RWPE1 (cell line): ENCODE measurements at regions of chr9 and their contacts with region 1.

Region 1: DNA sequence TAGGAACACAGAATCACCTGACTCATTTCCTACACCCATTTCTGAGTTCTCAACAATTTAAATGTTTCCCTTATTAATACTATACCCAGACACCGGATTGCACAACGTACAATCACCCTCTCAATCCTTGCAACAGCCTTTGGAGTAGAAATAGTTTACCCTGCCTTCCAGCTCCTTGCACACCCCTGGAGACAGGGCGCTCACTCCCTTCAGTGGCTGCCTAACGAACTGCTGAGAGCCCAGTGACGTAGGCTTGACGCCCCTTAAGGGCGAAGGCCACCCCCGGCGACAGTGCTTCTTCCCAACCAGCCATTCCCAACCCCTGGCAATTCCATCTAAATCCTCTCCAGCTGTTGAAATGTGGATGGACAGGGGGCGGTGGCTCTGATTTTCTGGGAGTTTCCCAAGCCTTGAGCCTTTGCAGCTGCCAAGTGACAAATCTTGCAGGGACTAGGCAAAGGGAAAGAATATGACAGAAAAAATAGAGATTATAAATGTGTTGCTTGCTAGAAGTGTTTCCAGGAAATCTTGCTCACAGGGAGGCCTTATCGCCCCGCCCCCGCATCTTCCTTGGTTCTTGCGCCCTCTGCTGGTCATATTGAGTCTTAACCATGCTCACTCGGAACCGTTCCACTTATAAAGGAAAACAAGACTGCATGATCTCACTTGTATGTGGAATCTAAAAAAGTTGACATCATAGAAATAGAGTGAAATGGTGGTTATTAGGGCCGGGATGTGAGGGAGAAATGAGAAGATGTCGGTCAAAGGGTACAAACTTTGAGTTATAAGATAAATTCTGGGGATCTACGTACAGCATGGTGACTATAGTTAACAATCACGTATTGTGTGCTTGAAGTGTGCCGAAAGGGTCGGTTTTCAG is 7.6 kb upstream of the BARX1 start:
- DNase-seq: peak; percentile 93
- H3K27ac ChIP-seq: no peak overlapping the region
- CTCF ChIP-seq: peak; percentile 97

Region 2: DNA sequence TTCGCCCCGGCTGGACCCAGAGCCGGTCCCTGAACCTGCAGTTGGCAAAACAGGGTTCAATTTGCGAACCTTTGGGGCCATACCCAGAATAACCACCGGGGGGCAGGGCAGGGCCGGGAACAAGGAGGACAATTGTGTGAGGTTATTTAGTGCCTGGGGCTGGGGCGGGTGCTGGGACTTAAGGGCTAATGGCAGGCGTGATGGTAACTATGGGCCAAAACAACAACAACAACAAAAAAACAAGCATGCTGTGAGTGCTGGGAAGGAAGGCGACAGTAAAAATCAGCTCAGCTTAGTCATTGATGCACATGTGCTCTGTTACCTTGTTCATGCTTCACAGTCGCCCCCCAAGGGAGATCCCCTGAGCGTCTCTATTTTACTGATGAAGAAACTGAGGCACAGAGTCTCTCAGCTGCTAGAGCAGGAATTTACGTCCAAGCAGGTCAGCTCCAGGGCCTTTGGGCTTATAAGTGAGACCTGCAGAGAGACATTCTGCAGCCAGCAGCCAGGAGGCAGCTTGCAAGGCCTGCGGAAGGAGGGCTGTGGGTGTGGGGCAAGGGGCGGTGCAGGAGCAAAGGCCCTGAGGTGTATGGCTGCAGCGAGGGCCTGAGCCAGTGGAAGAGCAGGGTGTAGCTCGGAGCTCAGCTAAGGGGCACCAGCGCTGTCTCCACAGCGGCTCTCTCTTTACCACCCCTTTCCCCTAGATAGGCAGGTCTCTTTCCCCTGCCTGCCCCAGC is 280.4 kb before region 1 on chr9:
- CTCF ChIA-PET with region 1: interaction called, 49 read pairs
- POLR2A ChIA-PET with region 1: no interaction called
- DNase-seq: peak; percentile 82
- H3K27ac ChIP-seq: no peak overlapping the region
- CTCF ChIP-seq: peak; percentile 94

Region 3: DNA sequence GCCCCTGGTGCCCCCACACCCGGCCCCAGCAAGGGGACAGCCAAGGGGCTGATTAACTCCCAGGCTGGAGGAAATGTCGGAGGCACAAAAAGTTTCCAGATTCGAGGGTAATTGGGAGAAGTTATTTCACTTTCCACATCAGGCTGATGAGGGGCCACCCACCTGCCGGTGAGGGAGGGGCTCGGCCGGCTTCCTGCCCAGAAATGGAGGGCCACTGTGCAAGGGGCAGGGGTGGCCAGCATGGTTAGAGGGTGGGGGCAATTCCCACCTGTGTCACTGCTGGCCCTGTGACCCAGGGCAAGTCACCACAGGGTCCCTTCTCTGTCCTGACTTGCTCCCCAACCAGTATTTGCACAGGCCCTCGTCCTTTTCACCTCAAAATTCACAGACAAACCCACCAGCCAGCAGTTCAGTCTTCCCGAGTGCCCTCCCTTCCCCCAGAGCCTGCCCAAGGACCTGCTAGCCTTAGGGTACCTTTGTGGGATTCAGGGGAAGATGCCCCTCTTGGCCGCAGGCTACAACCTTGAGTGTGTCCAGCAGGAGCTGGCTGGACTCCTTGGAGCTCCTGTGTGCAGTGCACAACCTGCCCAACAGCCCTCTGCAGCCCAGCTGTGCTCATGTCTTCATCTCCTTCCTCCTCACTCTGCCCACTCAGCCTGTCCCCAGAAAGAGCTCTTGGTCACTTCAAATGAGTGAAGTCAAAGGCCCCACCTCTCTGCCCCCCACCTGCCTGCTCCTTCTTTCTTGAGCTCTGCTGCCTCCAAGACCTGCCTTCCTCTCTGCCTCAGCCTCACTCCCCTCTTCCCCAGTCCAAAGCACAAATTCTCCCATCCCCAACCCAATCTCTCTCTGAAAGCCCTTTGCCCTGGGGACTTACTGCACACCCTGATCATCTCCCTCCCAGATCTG is 138.2 kb before region 1 on chr9:
- CTCF ChIA-PET with region 1: no interaction called
- POLR2A ChIA-PET with region 1: interaction called, 10 read pairs
- DNase-seq: no peak
- H3K27ac ChIP-seq: no peak overlapping the region
- CTCF ChIP-seq: no peak

Region 4: GRCh38 chr9:94002316-94003140 is 39.7 kb after region 1 on chr9:
- CTCF ChIA-PET with region 1: interaction called, 10 read pairs
- POLR2A ChIA-PET with region 1: no interaction called
- DNase-seq: peak; percentile 48
- H3K27ac ChIP-seq: no peak overlapping the region
- CTCF ChIP-seq: peak; percentile 69